ENCODE measurements at regions of chr5 and their contacts with region 1.

Region 1: GRCh38 chr5:96614110-96614691 is 48.0 kb upstream of the CAST start:
- DNase-seq: peak in 1 of 2 donors; percentile 82
- ATAC-seq: peak; percentile 74 to 94 (median 87)
- H3K4me3 ChIP-seq: peak overlapping the region in 3 of 10 donors; percentile 25 to 29 (median 28)
- H3K27ac ChIP-seq: peak overlapping the region; percentile 18 to 76 (median 62)
- H3K4me1 ChIP-seq: peaks cover 0 to 23% (median 19%) of the 10 kb centered on the region in 9 donors
- H3K27me3 ChIP-seq: no peaks in the 10 kb centered on the region
- CTCF ChIP-seq: peak in 8 of 9 donors; percentile 41 to 74 (median 65)

Region 2: DNA sequence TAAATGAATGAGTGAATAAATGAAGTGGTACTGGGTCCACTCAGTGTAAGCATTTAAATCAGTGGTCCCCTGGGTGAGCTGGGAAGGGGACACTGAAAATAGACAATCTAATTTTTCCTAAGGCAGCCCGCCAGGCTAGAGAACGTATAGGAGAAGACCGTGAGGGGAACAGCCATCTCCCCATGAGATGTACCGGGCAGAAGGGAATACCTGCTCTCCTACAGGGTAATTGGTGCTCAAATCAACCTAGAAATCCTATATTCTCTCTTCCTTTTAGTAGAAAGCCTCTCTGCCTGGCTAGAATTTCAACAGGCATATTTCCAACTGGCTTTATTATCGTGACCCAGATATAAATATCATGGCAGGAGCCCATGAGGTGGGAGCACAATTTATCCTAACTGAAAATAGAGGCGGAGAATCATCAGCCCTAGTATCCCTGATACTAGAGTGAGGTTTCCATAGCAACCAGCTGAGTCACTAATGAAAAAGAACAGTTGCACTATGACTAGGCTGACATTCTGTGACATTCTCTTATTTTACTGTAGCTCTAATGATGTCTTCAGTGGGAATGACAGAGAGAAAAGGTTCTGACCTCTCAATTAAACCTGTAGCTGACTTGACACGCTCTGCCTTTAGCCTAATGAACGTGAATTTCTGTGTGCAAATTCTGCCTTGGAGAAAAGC is 48.5 kb before region 1 on chr5:
- intact Hi-C with region 1: no loop called
- DNase-seq: no peak
- ATAC-seq: no peak
- H3K4me3 ChIP-seq: no peak overlapping the region
- H3K27ac ChIP-seq: no peak overlapping the region
- H3K4me1 ChIP-seq: peaks cover 0 to 9% (median 0%) of the 10 kb centered on the region in 9 donors
- H3K27me3 ChIP-seq: no peaks in the 10 kb centered on the region
- CTCF ChIP-seq: no peak

Region 3: GRCh38 chr5:96662725-96663513 is 48.7 kb after region 1 on chr5:
- intact Hi-C with region 1: loop called in 4 of 10 experiments (anchors 2 to 10 kb)
- DNase-seq: peak; percentile 90 to 94
- ATAC-seq: peak; percentile 92 to 97 (median 94)
- H3K4me3 ChIP-seq: peak overlapping the region; percentile 72 to 98 (median 94)
- H3K27ac ChIP-seq: peak overlapping the region; percentile 82 to 100 (median 98)
- H3K4me1 ChIP-seq: peaks cover 0 to 45% (median 27%) of the 10 kb centered on the region in 9 donors
- H3K27me3 ChIP-seq: no peaks in the 10 kb centered on the region
- CTCF ChIP-seq: peak in 1 of 9 donors; percentile 10

Region 4: DNA sequence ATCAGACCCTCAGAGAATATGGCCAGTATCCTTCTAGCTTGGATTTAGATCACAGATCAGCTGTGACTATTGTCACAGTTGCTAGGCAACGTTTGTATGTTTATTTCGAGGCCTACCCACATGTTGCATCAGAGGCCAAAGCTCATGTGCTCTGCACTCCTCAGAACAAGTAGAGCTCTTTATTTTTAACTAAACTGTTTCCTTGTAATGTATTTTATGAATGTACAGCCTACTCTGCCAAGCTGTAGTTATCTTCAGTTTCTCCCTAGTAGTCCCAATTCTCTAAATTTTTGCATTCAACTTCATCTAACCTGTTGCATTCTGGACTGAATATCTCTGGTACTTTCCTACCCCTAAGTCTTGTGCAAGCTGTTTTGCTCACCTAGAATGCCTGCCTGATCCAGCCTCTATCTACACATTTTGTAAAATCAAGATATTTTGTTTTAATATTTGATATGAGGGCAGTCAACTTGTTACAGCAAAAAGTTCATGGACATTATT is 100.8 kb after region 1 on chr5:
- intact Hi-C with region 1: loop called in 1 of 10 experiments (anchors 10 kb)
- DNase-seq: peak in 1 of 2 donors; percentile 73
- ATAC-seq: peak; percentile 76 to 91 (median 86)
- H3K4me3 ChIP-seq: no peak overlapping the region
- H3K27ac ChIP-seq: peak overlapping the region; percentile 49 to 80 (median 65)
- H3K4me1 ChIP-seq: peaks cover 5 to 98% (median 79%) of the 10 kb centered on the region in 9 donors
- H3K27me3 ChIP-seq: no peaks in the 10 kb centered on the region
- CTCF ChIP-seq: no peak

Region 5: GRCh38 chr5:96743065-96743768 is 129.0 kb after region 1 on chr5:
- intact Hi-C with region 1: loop called in 2 of 10 experiments (anchors 10 kb)
- DNase-seq: peak; percentile 44 to 52
- ATAC-seq: peak in 7 of 8 donors; percentile 57 to 80 (median 74)
- H3K4me3 ChIP-seq: peak overlapping the region in 7 of 10 donors; percentile 5 to 25 (median 18)
- H3K27ac ChIP-seq: peak overlapping the region; percentile 38 to 90 (median 74)
- H3K4me1 ChIP-seq: peaks cover 9 to 72% (median 44%) of the 10 kb centered on the region in 9 donors
- H3K27me3 ChIP-seq: no peaks in the 10 kb centered on the region
- CTCF ChIP-seq: no peak

Region 6: GRCh38 chr5:97142521-97143254 is 528.5 kb after region 1 on chr5 and contains the start of gene LIX1:
- intact Hi-C with region 1: loop called in 1 of 10 experiments (anchors 10 kb)
- DNase-seq: peak in 1 of 2 donors; percentile 23
- ATAC-seq: peak; percentile 64 to 84 (median 76)
- H3K4me3 ChIP-seq: no peak within 1 kb of the TSS
- H3K27ac ChIP-seq: no peak within 1 kb of the TSS
- H3K4me1 ChIP-seq: peaks cover 0 to 8% (median 0%) of the 10 kb centered on the region in 9 donors
- H3K27me3 ChIP-seq: no peaks in the 10 kb centered on the region
- CTCF ChIP-seq: peak; percentile 21 to 73 (median 61)
- total RNA-seq, gene LIX1: not detected

Region 7: DNA sequence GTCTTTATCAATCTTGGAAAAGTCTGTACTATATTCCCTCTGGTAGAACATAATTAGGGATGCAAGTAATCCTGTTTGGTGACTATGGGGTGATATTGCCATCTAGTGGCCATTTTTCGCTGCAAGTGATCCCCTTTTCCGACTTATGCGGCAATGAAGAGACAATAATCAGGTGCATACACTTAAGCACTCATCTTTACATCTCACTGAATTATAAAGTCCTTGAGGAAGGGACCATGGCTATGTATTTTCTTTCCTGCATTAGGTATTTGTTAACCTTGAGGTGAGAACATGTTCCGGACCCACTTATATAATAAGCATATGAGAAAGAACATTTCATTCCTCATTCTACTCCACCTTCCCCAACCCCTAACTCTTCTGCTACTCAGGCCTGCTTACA is 547.8 kb after region 1 on chr5:
- intact Hi-C with region 1: loop called in 7 of 10 experiments (anchors 2 to 10 kb)
- DNase-seq: peak in 1 of 2 donors; percentile 71
- ATAC-seq: peak in 6 of 8 donors; percentile 43 to 77 (median 68)
- H3K4me3 ChIP-seq: no peak overlapping the region
- H3K27ac ChIP-seq: no peak overlapping the region
- H3K4me1 ChIP-seq: peaks cover 0 to 10% (median 0%) of the 10 kb centered on the region in 9 donors
- H3K27me3 ChIP-seq: no peaks in the 10 kb centered on the region
- CTCF ChIP-seq: peak; percentile 70 to 93 (median 89)

Measured in heart right ventricle (tissue), 16 donors.